Adrenal gland (tissue), 19 donors: ENCODE measurements at regions of chr7 and their contacts with region 1.

Region 1: GRCh38 chr7:98106647-98107445 is at the start of gene LMTK2:
- DNase-seq: peak; percentile 94 to 98 (median 97)
- H3K4me3 ChIP-seq: peak within 1 kb of the TSS; percentile 92 to 99 (median 96)
- H3K27ac ChIP-seq: peak within 1 kb of the TSS in 4 of 5 donors; percentile 73 to 92 (median 87)
- H3K4me1 ChIP-seq: peaks cover 18 to 41% of the 10 kb centered on the region in 2 donors
- H3K27me3 ChIP-seq: no peaks in the 10 kb centered on the region
- CTCF ChIP-seq: peak; percentile 95 to 98 (median 97)
- POLR2A ChIP-seq: peak; percentile 72 to 92
- total RNA-seq, gene LMTK2: 9.4 to 36.2 (median 23.1) TPM

Region 2: DNA sequence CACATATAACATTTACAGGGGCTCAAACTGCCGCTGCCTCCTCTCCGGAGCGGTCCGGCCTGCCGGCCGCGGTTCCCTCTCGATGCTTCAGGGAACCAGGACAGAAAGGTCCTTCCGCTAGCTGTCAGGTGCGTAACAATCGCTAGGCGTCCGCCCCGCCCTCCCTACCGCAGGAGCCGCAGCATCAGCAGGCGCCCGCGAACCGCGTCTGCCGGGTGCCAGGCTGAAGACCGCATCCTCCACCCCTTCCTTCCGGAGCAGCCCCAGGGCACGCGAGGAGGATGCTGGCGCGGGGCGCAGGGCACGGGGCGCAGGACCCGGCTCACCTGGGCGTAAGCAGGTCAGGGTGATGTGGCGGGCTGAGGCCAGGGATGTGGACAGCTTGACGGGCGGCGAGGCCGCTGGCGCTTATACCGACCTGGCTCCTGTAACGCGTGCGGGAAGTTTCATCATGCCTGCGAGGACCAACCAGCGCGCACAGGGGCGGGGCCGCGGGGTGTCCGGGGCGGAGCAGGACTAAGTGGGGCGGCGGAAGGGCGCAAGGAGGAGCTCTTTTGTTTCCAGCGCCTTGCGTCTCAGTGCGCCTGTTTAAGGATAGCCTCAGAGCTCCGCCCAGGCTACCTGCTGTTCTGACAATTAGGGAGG is 234.7 kb before region 1 on chr7 and contains the start of gene ASNS:
- intact Hi-C with region 1: no loop called
- DNase-seq: peak; percentile 89 to 94 (median 90)
- H3K4me3 ChIP-seq: peak within 1 kb of the TSS in 3 of 4 donors; percentile 55 to 84 (median 65)
- H3K27ac ChIP-seq: peak within 1 kb of the TSS in 2 of 5 donors; percentile 73 to 81
- H3K4me1 ChIP-seq: peaks cover 0 to 4% of the 10 kb centered on the region in 2 donors
- H3K27me3 ChIP-seq: no peaks in the 10 kb centered on the region
- CTCF ChIP-seq: no peak
- POLR2A ChIP-seq: peak; percentile 49 to 63
- total RNA-seq, gene ASNS: 2.5 to 13.6 (median 11.1) TPM

Region 3: GRCh38 chr7:98066934-98067507 is 39.8 kb before region 1 on chr7:
- intact Hi-C with region 1: no loop called
- DNase-seq: peak in 1 of 7 donors; percentile 27
- H3K4me3 ChIP-seq: no peak overlapping the region
- H3K27ac ChIP-seq: no peak overlapping the region
- H3K4me1 ChIP-seq: no peaks in the 10 kb centered on the region
- H3K27me3 ChIP-seq: peaks cover 4% of the 10 kb centered on the region
- CTCF ChIP-seq: no peak
- POLR2A ChIP-seq: no peak

Region 4: GRCh38 chr7:98168181-98168905 is 61.5 kb after region 1 on chr7:
- intact Hi-C with region 1: loop called (anchors 1 to 2 kb)
- DNase-seq: peak; percentile 45 to 85 (median 64)
- H3K4me3 ChIP-seq: no peak overlapping the region
- H3K27ac ChIP-seq: no peak overlapping the region
- H3K4me1 ChIP-seq: peaks cover 8 to 12% of the 10 kb centered on the region in 2 donors
- H3K27me3 ChIP-seq: no peaks in the 10 kb centered on the region
- CTCF ChIP-seq: peak; percentile 75 to 91 (median 84)
- POLR2A ChIP-seq: no peak